ENCODE measurements at regions of chr7 and their contacts with region 1.

Region 1: DNA sequence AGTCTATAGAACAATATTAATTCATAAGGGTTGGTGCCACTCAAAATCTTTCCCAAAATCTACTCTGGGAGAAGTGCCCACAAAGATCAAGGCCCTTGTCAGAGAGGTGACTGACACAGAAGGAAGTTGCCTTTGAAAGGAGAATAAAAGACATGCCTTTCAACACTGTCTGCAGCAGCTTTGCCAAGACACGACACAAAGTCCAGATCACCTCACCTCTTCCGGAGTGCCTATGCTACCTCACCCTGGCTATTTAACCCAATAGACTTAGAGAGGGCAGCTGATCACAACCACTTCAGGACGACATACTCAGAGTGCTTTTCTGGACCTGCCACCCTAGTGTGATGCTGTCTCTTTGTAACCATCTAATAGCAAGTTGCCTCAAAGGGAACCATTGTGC is 49.0 kb upstream of the YAE1 start:
- DNase-seq: no peak
- H3K4me3 ChIP-seq: no peak overlapping the region
- H3K27ac ChIP-seq: no peak overlapping the region
- H3K4me1 ChIP-seq: peaks cover 0 to 5% (median 0%) of the 10 kb centered on the region in 4 donors
- H3K27me3 ChIP-seq: no peaks in the 10 kb centered on the region
- CTCF ChIP-seq: no peak

Region 2: GRCh38 chr7:38796626-38797501 is 720.4 kb before region 1 on chr7:
- intact Hi-C with region 1: loop called (anchors 5 kb)
- DNase-seq: peak in 1 of 2 donors; percentile 55
- H3K4me3 ChIP-seq: no peak overlapping the region
- H3K27ac ChIP-seq: no peak overlapping the region
- H3K4me1 ChIP-seq: no peaks in the 10 kb centered on the region
- H3K27me3 ChIP-seq: no peaks in the 10 kb centered on the region
- CTCF ChIP-seq: peak; percentile 72 to 76

Region 3: GRCh38 chr7:39589323-39590111 is 72.3 kb after region 1 on chr7:
- intact Hi-C with region 1: no loop called
- DNase-seq: no peak
- H3K4me3 ChIP-seq: no peak overlapping the region
- H3K27ac ChIP-seq: no peak overlapping the region
- H3K4me1 ChIP-seq: no peaks in the 10 kb centered on the region
- H3K27me3 ChIP-seq: no peaks in the 10 kb centered on the region
- CTCF ChIP-seq: no peak

Measured in tibial artery (tissue), 4 donors.